Ovary (tissue), 10 donors: ENCODE measurements at regions of chr16 and their contacts with region 1.

Region 1: DNA sequence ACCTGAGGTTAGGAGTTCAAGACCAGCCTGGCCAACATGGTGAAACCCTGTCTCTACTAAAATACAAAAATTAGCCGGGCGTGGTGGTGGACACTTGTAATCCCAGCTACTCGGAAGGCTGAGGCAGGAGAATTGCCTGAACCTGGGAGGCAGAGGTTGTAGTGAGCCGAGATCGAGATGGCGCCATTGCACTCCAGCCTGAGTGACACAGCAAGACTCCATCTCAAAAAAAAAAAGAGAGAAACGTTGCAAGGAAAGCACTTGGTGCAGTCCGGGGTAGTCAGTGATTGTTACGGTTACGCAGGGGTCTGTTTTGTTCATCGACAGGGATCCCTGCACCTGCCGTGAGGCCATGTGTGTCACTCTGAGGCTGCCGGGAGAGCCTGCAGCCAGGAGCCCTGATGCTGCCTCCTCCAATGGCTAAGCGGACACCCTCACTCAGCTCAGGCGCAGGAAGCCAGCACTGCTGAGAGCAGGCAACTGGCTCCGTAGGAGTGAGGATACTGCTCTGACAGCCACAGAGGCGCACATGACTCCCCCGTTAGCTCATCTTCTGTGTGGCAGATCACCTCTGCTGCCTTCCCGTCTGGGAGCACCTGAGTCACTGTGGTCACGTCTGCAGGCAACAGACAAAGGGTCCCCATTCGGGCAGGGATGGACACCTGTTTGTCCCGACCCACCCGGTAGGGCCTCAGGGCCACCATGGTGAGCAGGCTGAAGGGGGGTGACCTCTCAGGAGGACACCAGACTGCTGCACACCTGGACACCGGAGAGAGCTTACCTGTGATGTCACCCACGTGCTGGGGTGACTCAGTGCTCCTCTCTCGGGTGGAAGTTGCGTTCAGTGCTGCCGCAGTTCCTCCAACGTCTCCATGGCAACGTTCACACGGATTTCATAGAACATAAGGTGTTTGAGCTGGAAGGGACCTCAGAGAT is 5.2 kb upstream of the RAB26 start:
- DNase-seq: no peak
- H3K4me3 ChIP-seq: no peak overlapping the region
- H3K27ac ChIP-seq: no peak overlapping the region
- H3K4me1 ChIP-seq: peaks cover 5% of the 10 kb centered on the region
- H3K27me3 ChIP-seq: no peaks in the 10 kb centered on the region
- CTCF ChIP-seq: no peak
- EP300 ChIP-seq: no peak
- POLR2A ChIP-seq: no peak

Region 2: DNA sequence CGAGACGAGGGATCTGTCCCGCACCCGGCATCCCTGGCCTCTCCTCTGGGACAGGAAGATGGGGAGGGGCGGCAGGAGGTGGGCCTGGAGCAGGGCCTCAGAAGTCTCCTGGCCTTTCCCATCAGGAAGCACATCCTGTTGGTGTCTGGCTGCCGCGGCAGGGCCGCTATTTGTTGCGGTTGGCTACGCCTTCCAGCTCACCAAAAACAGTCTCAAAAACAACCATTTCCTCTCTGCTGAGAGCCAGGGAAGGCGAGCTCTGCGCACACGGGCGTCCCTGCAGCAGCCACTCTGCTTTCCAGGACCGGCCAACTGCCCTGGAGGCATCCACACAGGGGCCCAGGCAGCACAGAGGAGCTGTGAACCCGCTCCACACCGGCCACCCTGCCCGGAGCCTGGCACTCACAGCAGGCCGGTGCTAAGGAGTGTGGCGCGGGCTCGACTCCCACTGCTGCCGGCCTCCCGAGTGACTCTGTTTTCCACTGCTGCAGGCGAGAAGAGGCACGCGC is 609.7 kb before region 1 on chr16 and contains the start of gene TMEM204:
- intact Hi-C with region 1: no loop called
- DNase-seq: peak; percentile 66 to 81 (median 74)
- H3K4me3 ChIP-seq: peak within 1 kb of the TSS; percentile 41
- H3K27ac ChIP-seq: peak within 1 kb of the TSS; percentile 54 to 85
- H3K4me1 ChIP-seq: peaks cover 17% of the 10 kb centered on the region
- H3K27me3 ChIP-seq: no peaks in the 10 kb centered on the region
- CTCF ChIP-seq: no peak
- EP300 ChIP-seq: no peak
- POLR2A ChIP-seq: no peak
- total RNA-seq, gene TMEM204: 9.2 to 23.7 (median 13.8) TPM

Region 3: GRCh38 chr16:2016407-2016922 is 126.7 kb before region 1 on chr16:
- intact Hi-C with region 1: loop called in 2 of 4 experiments (anchors 5 kb)
- DNase-seq: peak in 2 of 5 donors; percentile 21 to 39
- H3K4me3 ChIP-seq: no peak overlapping the region
- H3K27ac ChIP-seq: no peak overlapping the region
- H3K4me1 ChIP-seq: peaks cover 5% of the 10 kb centered on the region
- H3K27me3 ChIP-seq: no peaks in the 10 kb centered on the region
- CTCF ChIP-seq: no peak
- EP300 ChIP-seq: no peak
- POLR2A ChIP-seq: no peak

Region 4: DNA sequence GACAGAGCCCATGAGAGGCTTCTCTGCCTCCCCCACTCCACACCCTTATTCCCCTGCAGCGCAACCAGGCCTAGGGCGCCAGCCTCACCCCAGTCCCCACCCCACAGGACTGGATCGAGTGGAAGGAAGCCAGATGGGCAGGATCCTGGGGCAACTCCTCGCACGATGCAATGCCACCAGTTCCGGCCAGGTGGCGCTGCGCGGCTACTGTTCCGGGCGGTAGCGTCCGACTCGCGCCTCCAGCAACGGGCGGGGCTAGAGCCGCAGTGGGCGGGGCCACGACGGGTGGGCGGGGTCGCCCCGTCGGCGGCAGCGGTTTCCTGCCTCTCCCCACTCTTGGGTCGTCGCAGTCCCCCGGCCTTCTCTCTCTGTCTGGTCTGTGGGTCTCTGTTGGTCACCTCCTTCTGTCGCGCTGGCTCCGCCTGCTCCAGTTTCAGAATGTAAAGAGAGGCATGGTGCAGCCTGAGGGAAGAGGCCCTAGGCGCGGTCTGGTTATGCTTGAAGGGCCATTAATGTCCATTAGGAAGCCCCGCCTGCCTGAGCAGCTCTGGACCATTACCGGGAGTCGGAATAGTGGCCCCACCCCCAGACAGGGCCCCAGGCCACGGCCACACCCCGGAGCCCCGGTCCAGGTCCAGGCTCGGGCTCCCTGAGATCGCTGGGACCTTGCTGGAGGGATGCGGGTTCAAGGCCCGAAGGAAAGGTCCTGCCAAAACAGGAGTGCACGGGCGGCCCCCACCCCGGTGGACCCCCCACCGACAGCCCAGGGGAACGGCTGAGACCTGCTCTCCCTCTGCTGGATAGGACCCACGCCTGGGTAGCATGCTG is 119.9 kb before region 1 on chr16:
- intact Hi-C with region 1: loop called (anchors 2 to 5 kb)
- DNase-seq: peak; percentile 88 to 97 (median 94)
- H3K4me3 ChIP-seq: peak overlapping the region; percentile 31
- H3K27ac ChIP-seq: peak overlapping the region; percentile 24 to 37
- H3K4me1 ChIP-seq: peaks cover 17% of the 10 kb centered on the region
- H3K27me3 ChIP-seq: no peaks in the 10 kb centered on the region
- CTCF ChIP-seq: peak; percentile 93 to 99 (median 99)
- EP300 ChIP-seq: no peak
- POLR2A ChIP-seq: peak; percentile 41

Region 5: DNA sequence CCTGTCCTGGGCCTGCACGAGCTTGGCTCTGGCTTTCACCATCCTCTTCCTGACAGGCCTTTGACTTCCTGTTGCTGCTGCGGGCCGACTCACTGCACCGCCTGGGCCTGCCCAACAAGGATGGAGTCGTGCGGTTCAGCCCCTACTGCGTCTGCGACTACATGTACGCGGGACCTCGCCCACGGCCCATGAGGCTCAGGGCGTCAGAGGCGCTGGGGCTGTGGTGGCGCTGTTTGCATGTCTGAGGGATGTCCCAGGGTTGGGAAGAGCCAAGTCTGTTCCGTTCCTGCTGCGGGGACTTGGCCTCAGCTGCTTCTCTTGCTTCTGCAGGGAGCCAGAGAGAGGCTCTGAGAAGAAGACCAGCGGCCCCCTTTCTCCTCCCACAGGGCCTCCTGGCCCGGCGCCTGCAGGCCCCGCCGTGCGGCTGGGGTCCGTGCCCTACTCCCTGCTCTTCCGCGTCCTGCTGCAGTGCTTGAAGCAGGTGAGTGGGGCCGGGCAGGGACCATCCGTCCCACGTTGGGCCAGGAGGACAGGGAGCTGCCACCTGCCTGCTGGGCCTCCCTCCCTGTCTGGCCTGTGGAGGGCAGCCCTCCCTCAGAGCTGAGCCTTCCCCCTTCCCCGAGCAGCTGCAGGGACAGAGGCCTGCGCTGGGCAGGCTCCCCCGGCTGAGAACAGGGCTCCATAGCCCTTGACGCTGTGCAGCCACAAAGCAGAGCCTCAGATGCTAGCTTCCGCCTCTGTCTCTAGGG is 71.6 kb before region 1 on chr16:
- intact Hi-C with region 1: loop called in 1 of 4 experiments (anchors 10 kb)
- DNase-seq: no peak
- H3K4me3 ChIP-seq: no peak overlapping the region
- H3K27ac ChIP-seq: no peak overlapping the region
- H3K4me1 ChIP-seq: no peaks in the 10 kb centered on the region
- H3K27me3 ChIP-seq: no peaks in the 10 kb centered on the region
- CTCF ChIP-seq: no peak
- EP300 ChIP-seq: no peak
- POLR2A ChIP-seq: no peak